K562 (cell line): ENCODE measurements at regions of chr2 and their contacts with region 1.

Region 1: DNA sequence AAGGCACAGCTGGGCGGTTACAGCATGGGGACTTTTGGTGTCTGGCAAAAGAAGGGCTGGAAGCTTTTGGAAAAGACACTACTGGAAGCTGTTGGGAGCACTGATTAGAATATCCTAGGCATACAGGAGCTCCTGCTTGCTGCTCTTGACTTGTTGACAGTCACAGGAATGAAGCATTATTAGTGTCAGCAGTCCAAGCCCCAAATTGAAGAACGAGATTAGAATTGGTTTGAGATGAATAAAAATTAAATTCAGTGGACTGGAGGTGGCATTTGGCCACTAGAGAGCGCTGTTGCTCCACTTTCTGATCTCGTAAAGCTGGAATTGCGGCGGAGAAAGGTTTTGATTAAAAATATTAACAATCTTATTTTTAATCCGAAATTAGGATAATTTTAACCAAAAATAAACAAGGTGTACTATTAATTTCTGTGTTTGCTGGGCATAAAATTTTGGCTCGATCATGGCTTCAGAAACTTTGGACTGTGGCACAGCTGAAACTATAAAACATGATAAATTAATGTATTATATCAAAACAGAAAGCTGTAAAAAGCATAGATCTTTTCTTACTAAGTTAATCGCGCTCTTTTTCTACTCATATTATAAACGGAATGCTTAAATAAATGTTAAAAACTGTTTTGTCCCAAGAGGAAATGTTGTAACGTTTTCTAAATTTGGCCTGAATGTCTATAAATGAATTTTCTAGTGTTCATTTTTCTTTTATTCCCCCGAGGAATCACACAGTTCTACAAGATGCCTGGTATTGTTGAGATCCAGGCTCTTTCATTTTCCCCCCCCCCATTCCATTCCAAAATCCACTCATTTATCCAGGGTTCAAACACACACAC is 2.4 kb upstream of the HOXD8 start:
- DNase-seq: peak; percentile 59 to 76 (median 66)
- ATAC-seq: 0 out of 3 replicates have a peak, but pooled peaks have one; percentile 25
- H3K4me3 ChIP-seq: no peak overlapping the region
- H3K27ac ChIP-seq: no peak overlapping the region
- H3K4me1 ChIP-seq: peaks cover 0 to 34% of the 10 kb centered on the region in 2 experiments; a peak in 2 of 5 replicates
- H3K27me3 ChIP-seq: peaks cover 62 to 69% of the 10 kb centered on the region in 2 experiments
- CTCF ChIP-seq: peak; percentile 77 to 95 (median 83)
- EP300 ChIP-seq: no peak
- POLR2A ChIP-seq: no peak
- RAD21 ChIP-seq: peak; percentile 85

Region 2: DNA sequence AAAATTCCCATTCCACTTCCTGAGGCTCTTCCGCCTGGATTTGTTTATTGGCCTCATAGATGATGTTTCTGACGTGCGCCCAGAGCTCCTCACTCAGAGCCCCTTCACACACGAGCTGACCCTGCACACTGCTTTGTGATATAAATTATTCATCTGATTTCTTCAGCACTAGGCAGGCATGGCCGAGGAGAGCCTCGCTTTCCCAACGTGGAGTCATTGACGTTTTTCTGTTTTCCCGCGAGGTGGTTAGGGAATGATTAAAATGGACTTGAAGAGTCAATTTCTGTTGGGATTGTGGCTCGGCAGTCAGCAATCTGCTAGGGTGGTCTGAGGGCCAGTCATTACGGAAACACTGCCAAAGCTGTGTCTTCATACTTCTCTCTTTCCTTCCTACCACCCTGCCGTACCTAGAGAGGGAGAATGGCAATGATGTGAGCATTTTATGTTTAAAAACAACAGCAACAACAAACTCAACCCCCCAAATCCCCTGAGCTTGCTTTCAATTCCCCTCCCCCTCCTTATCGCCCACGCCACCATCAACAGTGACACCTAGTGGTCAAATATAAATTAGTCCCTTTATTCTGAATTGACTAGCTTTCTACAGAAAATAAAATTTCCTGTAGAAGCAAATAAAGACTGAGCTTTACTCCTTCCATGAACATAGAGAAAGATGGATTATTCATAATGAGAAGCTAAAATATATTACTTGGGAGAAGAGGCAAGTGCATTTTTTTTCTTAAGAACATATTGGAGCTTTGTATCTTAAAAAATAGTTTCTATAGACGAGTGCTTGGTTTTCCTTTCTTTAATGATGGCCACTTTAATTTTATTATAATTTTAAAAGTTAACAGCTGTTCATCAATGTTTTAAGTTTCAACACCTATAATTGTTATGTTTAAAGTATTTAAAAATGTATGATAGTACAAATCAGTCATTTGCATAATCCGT is 427.2 kb after region 1 on chr2:
- CTCF ChIA-PET with region 1: interaction called, 5 read pairs
- POLR2A ChIA-PET with region 1: no interaction called
- in situ Hi-C with region 1: no loop called
- intact Hi-C with region 1: loop called (anchors 5 kb)
- DNase-seq: peak; percentile 69 to 81 (median 78)
- ATAC-seq: peak; percentile 84
- H3K4me3 ChIP-seq: no peak overlapping the region
- H3K27ac ChIP-seq: no peak overlapping the region
- H3K4me1 ChIP-seq: peaks cover 0 to 3% of the 10 kb centered on the region in 2 experiments; a peak in 1 of 5 replicates
- H3K27me3 ChIP-seq: peaks cover 6 to 20% of the 10 kb centered on the region in 2 experiments
- CTCF ChIP-seq: peak; percentile 66 to 82 (median 78)
- EP300 ChIP-seq: no peak
- POLR2A ChIP-seq: no peak
- RAD21 ChIP-seq: peak; percentile 79 to 87

Region 3: DNA sequence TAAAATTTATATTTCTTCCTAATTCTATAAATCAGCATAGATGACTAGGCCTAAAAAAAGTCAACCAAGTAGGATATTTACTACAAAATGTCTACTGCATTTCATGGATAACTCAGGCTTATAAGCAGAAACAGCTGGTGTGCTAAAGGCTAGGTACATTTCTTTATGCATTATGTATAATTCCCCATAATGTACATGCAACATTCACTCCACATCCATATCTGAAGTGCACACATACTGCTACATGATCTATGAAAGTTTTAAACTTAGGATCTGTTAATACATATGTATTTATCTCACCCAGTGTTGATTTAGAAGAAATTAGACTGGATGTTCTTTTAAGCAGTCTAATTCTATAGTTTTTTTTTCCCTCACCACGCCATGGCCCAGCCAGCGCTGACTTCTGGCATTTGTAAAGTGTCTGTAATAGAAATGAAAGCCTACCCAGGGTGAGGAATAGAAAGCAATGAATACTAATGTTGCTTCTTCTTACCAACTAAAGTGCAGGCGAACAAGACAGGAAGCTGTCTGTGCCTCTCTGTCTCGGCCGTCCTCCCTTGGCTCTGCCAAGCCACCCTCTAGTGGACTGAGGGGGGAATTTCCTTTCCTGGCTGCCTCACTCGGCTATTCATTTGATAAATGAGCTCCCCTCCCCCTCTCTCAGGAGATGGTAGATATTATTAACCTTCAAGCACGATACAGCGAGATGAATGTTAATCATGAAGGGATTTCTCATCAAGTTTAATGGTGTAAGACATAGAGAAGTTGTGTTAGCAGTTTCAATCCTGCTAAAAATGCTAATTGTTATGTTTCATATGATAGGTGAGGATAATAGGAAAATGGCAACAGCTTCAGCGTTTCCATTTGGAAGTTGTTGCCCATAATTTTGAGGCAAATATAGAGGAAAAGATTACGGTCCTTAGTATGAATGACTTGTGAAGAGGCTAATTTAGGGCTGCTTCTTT is 526.6 kb after region 1 on chr2:
- CTCF ChIA-PET with region 1: interaction called, 31 read pairs
- POLR2A ChIA-PET with region 1: interaction called, 5 read pairs
- in situ Hi-C with region 1: no loop called
- intact Hi-C with region 1: loop called (anchors 2 kb)
- DNase-seq: peak; percentile 29 to 58 (median 50)
- ATAC-seq: peak; percentile 95
- H3K4me3 ChIP-seq: no peak overlapping the region
- H3K27ac ChIP-seq: no peak overlapping the region
- H3K4me1 ChIP-seq: no peaks in the 10 kb centered on the region
- H3K27me3 ChIP-seq: no peaks in the 10 kb centered on the region; a peak in 2 of 5 replicates
- CTCF ChIP-seq: peak; percentile 64 to 77 (median 66)
- EP300 ChIP-seq: no peak
- POLR2A ChIP-seq: no peak
- RAD21 ChIP-seq: peak; percentile 26 to 42; a peak in 2 of 4 replicates

Region 4: GRCh38 chr2:177148477-177149154 is 1021.5 kb after region 1 on chr2:
- CTCF ChIA-PET with region 1: interaction called, 12 read pairs
- POLR2A ChIA-PET with region 1: no interaction called
- in situ Hi-C with region 1: loop called (anchors 5 kb)
- intact Hi-C with region 1: loop called (anchors 2 kb)
- DNase-seq: peak; percentile 58 to 89 (median 70)
- ATAC-seq: peak; percentile 99
- H3K4me3 ChIP-seq: peak overlapping the region; percentile 27
- H3K27ac ChIP-seq: no peak overlapping the region
- H3K4me1 ChIP-seq: peaks cover 0 to 6% of the 10 kb centered on the region in 2 experiments; a peak in 2 of 5 replicates
- H3K27me3 ChIP-seq: peaks cover 8 to 10% of the 10 kb centered on the region in 2 experiments
- CTCF ChIP-seq: peak; percentile 90 to 97 (median 93)
- EP300 ChIP-seq: no peak
- POLR2A ChIP-seq: no peak
- RAD21 ChIP-seq: peak; percentile 67 to 85